Natural killer cell (primary cell): ENCODE measurements at regions of chr1 and their contacts with region 1.

Region 1: DNA sequence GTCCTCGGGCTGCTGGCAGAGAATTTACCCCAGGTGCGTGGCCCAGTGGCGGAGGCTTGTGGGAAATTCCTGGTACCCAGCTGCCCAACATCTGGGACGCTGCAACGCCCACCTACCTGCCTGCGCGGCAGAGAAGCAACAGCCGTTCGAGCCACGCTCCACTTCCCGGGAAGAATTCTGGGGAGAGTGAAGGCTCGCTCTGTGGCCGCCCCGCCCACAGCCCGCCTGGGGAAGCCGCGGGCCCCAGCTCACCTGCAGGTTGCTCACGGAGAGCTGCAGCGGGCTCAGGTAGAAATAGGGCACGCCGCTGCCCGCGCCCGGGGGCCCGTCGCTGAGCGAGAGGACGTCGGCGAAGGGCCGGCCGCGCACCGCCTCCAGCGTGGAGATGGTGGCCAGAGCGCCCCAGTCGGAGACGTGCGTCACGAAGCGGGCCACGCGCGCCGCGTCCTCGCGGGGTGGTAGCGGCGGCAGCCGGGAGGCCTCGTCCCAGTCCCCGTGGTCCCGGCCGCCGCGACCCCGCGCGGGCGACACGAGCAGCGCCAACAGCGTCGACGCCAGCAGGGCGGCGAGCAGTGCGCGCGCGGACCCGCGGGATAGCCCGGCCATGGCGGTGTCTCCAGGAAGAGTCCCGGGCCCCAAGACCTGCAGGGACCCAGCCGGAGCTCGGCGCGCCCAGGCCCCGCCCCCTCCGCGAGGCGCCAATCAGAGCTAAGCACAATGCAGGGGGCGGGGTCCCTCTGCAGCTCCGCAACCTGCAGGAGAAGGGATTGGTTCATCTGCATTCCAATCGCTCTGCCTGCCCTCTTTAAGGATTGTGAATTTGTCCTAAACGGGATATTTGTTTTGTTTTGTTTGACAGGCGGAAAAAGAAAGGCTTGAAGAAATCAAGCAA is at the start of gene CREG1:
- DNase-seq: peak; percentile 87 to 94
- ATAC-seq: peak; percentile 97 to 99 (median 97)
- H3K4me3 ChIP-seq: peak within 1 kb of the TSS; percentile 58
- H3K4me3 Mint-ChIP-seq: peak within 1 kb of the TSS; percentile 92
- H3K27ac ChIP-seq: no peak within 1 kb of the TSS
- H3K27ac Mint-ChIP-seq: peak within 1 kb of the TSS; percentile 43 to 70
- H3K4me1 ChIP-seq: peaks cover 20% of the 10 kb centered on the region
- H3K4me1 Mint-ChIP-seq: peaks cover 12 to 20% of the 10 kb centered on the region in 2 donors
- H3K27me3 ChIP-seq: no peaks in the 10 kb centered on the region
- H3K27me3 Mint-ChIP-seq: peaks cover 0 to 9% of the 10 kb centered on the region in 2 donors
- CTCF ChIP-seq: no peak
- total RNA-seq, gene CREG1: 6.7 to 15.8 (median 8.9) TPM

Region 2: GRCh38 chr1:166902271-166902670 is 651.1 kb before region 1 on chr1:
- intact Hi-C with region 1: loop called (anchors 10 kb)
- DNase-seq: peak in 1 of 2 donors; percentile 7
- ATAC-seq: peak; percentile 46 to 52 (median 50)
- H3K4me3 ChIP-seq: no peak overlapping the region
- H3K4me3 Mint-ChIP-seq: no peak overlapping the region
- H3K27ac ChIP-seq: no peak overlapping the region
- H3K27ac Mint-ChIP-seq: no peak overlapping the region
- H3K4me1 ChIP-seq: no peaks in the 10 kb centered on the region
- H3K4me1 Mint-ChIP-seq: peaks cover 10 to 11% of the 10 kb centered on the region in 2 donors
- H3K27me3 ChIP-seq: no peaks in the 10 kb centered on the region
- H3K27me3 Mint-ChIP-seq: peaks cover 0 to 9% of the 10 kb centered on the region in 2 donors
- CTCF ChIP-seq: no peak